Left ventricle myocardium superior (tissue), 1 donor: ENCODE measurements at regions of chr5 and their contacts with region 1.

Region 1: DNA sequence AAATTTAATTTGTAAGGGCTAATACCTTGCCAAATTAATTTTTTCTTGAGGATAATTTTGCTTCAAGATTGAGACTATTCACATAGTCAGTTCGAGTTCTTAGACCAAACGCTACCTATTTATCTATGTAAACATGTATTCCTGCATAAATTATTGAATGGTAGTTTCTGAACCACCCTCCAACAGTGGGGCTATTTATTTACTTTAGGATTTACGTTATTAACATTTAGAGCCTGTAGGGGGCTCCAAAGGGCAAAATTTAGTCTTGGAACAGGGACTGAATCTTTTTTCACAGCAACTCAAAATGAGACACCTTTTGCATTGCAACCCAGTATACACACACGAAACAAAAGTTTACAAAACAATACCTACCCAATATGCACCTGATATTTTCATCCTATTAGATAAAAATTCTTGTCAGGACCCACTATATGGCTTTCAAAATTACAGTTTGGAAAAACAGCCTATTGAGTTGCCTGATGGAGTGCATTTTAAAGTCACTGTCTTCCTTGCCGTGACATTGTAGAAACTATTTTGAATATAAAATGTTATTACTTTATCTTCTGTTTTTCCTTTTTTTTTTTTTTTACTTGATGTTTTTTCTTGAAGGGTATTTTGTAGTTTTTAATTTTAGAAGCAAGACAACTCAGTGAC is 47.1 kb upstream of the POU4F3 start:
- DNase-seq: no peak
- ATAC-seq: peak; percentile 66

Region 2: DNA sequence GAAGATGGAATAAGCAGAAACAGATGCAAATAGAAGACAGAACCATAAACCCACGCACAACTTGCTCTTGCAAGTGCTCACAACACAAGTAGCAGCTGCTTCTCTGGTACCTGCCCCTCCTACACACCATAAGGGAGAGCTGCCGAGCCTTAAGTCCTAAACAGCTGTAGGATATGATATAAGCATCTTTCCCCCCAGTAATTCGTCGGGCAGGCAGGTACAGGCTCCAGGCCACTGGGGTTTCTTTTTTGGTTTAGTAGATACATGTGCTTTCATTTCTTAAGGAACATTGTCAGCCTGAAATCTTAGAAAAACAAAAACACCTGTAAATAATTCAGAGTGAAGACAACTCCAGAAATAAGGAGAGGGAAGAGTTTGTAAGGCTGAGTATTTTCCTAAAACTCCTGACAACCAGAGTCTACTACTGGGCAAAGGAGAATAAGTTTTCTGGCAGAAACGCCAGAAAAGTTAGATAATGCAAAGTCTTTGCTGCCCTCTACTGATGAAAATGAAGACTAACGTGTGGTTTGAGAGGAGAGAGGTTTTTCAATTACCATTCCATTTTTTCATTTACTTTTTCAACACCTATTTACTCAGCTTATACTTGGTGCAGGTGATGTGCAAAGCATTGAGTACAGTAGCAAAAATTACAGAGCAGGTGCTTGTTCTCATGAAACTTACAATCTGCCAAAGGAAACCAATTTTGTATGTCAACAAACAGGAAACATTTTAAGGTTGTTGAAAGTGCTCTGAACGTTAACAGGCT is 135.5 kb after region 1 on chr5:
- intact Hi-C with region 1: loop called (anchors 2 kb)
- DNase-seq: no peak
- ATAC-seq: peak; percentile 64